A549 (cell line): ENCODE measurements at regions of chr4 and their contacts with region 1.

Region 1: DNA sequence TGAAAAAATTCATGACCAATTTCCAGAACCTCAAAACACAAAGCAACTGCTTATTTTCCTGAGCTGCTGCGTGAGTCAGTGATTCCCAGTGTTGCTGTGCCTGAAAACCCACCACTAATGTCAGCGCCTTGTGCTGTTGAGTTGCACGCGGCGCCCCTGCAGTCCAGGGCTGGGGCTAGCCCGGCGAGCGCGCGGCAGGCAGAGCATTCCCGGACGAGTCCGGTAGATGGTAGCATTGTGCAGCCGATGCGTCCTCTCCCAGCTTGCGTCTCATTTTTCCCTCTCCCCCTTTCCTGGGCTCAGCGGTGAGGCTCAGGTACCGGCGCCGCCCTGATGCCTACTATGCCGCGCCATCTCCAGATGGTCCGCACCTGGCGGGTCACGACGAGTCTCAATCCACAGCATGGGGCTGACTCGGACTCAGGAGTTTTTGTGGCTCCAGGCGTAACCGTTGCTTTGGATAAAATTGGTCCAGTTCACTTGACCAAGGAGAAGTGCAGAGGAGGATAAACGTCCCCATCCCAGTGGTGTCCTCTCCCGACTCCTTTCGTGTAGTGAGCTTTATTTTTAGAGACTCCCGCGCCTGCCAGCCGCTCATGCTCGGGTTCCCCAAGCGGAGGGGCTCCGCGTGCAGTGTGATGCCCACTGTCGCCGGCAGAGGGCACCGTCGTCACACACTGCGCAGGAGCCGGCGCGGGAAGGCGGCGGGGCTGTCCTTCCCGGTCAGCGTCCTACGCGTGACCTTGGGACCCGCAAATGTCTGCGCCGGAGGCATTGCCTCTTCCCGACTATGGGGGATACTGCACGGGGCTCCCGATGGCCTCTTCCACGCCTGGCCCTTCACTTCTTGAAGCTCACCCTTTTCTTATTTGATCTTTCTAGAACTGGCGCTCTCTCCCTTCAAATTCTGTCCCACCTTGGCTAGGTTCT is 53.6 kb upstream of the IGFBP7 start:
- DNase-seq: peak; percentile 38 to 78
- ATAC-seq: peak; percentile 94 to 99
- H3K4me3 ChIP-seq: peak overlapping the region; percentile 61
- H3K27ac ChIP-seq: peak overlapping the region; percentile 87 to 94
- H3K4me1 ChIP-seq: no peaks in the 10 kb centered on the region
- CTCF ChIP-seq: peak; percentile 66
- EP300 ChIP-seq: no peak
- POLR2A ChIP-seq: no peak
- RAD21 ChIP-seq: peak; percentile 73 to 77

Region 2: DNA sequence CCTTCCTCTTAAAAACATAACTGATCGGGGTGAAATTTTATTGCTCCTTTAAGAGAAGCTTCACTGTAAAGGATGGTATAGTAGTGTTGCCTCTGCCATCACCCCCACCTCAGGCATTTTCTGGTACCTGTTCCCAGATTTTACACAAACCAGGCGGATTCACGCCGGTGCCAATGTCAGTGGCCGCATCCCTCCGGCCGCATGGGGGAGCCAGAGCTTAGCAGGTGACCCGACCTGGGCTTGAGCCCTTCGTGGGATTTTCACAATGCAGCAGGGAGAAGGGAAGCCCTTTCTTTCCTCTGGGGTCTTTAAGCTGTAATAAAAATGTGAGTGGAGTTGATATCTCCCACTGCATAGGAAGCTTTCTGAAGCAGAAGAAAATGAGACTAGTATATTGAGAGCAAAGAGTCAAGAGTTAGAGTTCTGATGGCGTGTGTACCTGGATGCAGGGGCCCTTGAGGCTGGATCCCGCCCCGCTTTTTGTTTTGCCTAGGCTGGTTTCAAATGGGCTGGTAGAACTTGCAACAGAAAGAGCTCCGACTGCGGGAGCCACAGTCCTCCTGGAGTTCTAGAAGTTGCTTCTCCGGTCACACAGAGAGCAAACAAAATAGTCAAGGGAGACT is 125.7 kb before region 1 on chr4:
- CTCF ChIA-PET with region 1: interaction called, 60 read pairs
- POLR2A ChIA-PET with region 1: no interaction called
- DNase-seq: peak; percentile 25 to 56
- ATAC-seq: peak; percentile 85 to 86; a peak in 5 of 6 replicates
- H3K4me3 ChIP-seq: no peak overlapping the region
- H3K27ac ChIP-seq: peak overlapping the region; percentile 62 to 73
- H3K4me1 ChIP-seq: peaks cover 38% of the 10 kb centered on the region
- CTCF ChIP-seq: peak; percentile 70
- EP300 ChIP-seq: no peak
- POLR2A ChIP-seq: no peak
- RAD21 ChIP-seq: peak; percentile 86 to 92

Region 3: GRCh38 chr4:57119054-57119651 is 44.6 kb before region 1 on chr4:
- CTCF ChIA-PET with region 1: interaction called, 14 read pairs
- POLR2A ChIA-PET with region 1: no interaction called
- DNase-seq: peak in 1 of 2 experiments; percentile 75
- ATAC-seq: peak; percentile 95 to 97
- H3K4me3 ChIP-seq: no peak overlapping the region
- H3K27ac ChIP-seq: peak overlapping the region; percentile 70 to 89
- H3K4me1 ChIP-seq: peaks cover 33% of the 10 kb centered on the region
- CTCF ChIP-seq: no peak
- EP300 ChIP-seq: peak in 1 of 2 experiments; percentile 36; a peak in 1 of 5 replicates
- POLR2A ChIP-seq: no peak
- RAD21 ChIP-seq: no peak

Region 4: GRCh38 chr4:57147335-57148060 is 16.3 kb before region 1 on chr4:
- CTCF ChIA-PET with region 1: interaction called, 20 read pairs
- POLR2A ChIA-PET with region 1: no interaction called
- DNase-seq: no peak
- ATAC-seq: no peak
- H3K4me3 ChIP-seq: no peak overlapping the region
- H3K27ac ChIP-seq: no peak overlapping the region
- H3K4me1 ChIP-seq: peaks cover 8% of the 10 kb centered on the region; the same call in 1 of the 3 replicates
- CTCF ChIP-seq: no peak
- EP300 ChIP-seq: no peak
- POLR2A ChIP-seq: no peak
- RAD21 ChIP-seq: no peak

Region 5: DNA sequence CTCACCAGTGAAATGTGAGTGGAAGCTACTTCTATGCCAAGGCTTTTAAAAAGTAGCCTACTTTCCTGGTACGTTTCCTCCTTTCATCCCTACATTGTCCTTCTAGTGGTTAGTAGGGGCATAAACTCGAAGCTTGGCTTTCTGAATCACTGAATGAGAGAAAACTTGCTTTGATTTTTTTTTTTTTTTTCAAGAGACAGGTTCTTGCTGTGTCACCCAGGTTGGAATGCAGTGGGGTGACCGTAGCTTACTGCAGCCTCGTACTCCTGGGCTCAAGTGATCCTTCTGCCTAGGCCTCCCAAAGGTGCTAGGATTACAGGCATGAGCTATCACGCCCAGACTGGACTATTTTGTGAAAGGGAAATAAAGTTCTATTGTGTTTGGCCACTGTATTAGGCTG is 35.5 kb after region 1 on chr4:
- CTCF ChIA-PET with region 1: interaction called, 10 read pairs
- POLR2A ChIA-PET with region 1: no interaction called
- DNase-seq: no peak
- ATAC-seq: no peak
- H3K4me3 ChIP-seq: no peak overlapping the region
- H3K27ac ChIP-seq: no peak overlapping the region
- H3K4me1 ChIP-seq: no peaks in the 10 kb centered on the region
- CTCF ChIP-seq: no peak
- EP300 ChIP-seq: no peak
- POLR2A ChIP-seq: no peak
- RAD21 ChIP-seq: no peak

Region 6: GRCh38 chr4:57303012-57303751 is 139.4 kb after region 1 on chr4:
- CTCF ChIA-PET with region 1: no interaction called
- POLR2A ChIA-PET with region 1: no interaction called
- DNase-seq: peak in 1 of 2 experiments; percentile 5
- ATAC-seq: peak in 1 of 2 experiments; percentile 50; a peak in 2 of 6 replicates
- H3K4me3 ChIP-seq: no peak overlapping the region
- H3K27ac ChIP-seq: no peak overlapping the region
- H3K4me1 ChIP-seq: no peaks in the 10 kb centered on the region
- CTCF ChIP-seq: no peak
- EP300 ChIP-seq: no peak
- POLR2A ChIP-seq: no peak
- RAD21 ChIP-seq: no peak

Region 7: GRCh38 chr4:57318698-57319097 is 154.9 kb after region 1 on chr4:
- CTCF ChIA-PET with region 1: no interaction called
- POLR2A ChIA-PET with region 1: no interaction called
- DNase-seq: no peak
- ATAC-seq: no peak
- H3K4me3 ChIP-seq: no peak overlapping the region
- H3K27ac ChIP-seq: no peak overlapping the region
- H3K4me1 ChIP-seq: no peaks in the 10 kb centered on the region
- CTCF ChIP-seq: no peak
- EP300 ChIP-seq: no peak
- POLR2A ChIP-seq: no peak
- RAD21 ChIP-seq: no peak